MCF 10A (cell line): ENCODE measurements at regions of chr17 and their contacts with region 1.

Region 1: DNA sequence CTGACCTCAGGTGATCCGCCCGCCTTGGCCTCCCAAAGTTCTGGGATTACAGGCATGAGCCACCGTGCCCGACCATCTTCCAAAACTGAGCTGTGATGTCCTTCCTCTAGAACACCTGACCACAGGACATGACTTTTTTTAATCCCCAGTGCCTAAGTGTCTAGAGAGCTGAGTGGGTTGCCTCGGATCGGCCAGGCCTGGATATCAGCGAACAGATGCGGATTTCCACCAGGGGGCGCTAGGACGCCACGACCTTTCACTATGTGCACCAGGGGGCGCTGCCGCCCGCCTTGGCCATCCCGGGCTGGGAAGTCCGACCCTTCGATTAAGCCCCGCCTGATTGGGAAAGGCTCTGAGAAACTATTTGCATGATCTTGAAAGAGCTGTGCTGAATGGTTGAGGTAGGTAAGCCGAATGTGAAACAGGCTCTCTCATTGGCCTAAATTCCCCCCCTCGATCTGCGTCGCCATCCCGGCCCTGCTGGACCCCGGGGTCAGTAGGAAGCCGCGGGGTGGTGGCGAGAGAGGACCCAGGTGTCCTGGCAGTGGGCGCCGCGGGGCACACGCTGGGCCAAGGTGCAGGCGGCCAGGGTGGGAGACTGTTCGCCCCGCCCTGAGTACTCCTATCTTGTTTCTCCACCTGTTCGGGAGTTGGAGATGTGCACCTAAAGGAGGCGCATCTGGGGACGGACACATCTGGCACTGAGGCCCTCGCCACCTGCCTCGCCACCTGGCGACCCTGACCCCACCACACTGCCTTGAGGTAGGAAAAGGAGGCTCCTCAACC is at the start of gene ACBD4:
- DNase-seq: peak; percentile 98
- H3K4me3 Mint-ChIP-seq: peak within 1 kb of the TSS; percentile 79
- H3K27ac Mint-ChIP-seq: peak within 1 kb of the TSS; percentile 63
- H3K4me1 Mint-ChIP-seq: peaks cover 17% of the 10 kb centered on the region
- H3K27me3 Mint-ChIP-seq: no peaks in the 10 kb centered on the region
- CTCF ChIP-seq: peak; percentile 100
- total RNA-seq, gene ACBD4: 7.2 and 7.8 TPM in 2 replicates

Region 2: GRCh38 chr17:44775136-44775837 is 360.1 kb before region 1 on chr17:
- CTCF ChIA-PET with region 1: interaction called, 3 read pairs
- POLR2A ChIA-PET with region 1: no interaction called
- intact Hi-C with region 1: loop called (anchors 1 kb)
- DNase-seq: peak; percentile 99
- H3K4me3 Mint-ChIP-seq: peak overlapping the region; percentile 84
- H3K27ac Mint-ChIP-seq: no peak overlapping the region
- H3K4me1 Mint-ChIP-seq: peaks cover 11% of the 10 kb centered on the region
- H3K27me3 Mint-ChIP-seq: peaks cover 13% of the 10 kb centered on the region
- CTCF ChIP-seq: no peak

Region 3: GRCh38 chr17:44919885-44920564 is 215.4 kb before region 1 on chr17:
- CTCF ChIA-PET with region 1: interaction called, 8 read pairs
- POLR2A ChIA-PET with region 1: no interaction called
- intact Hi-C with region 1: loop called (anchors 5 kb)
- DNase-seq: peak; percentile 85
- H3K4me3 Mint-ChIP-seq: no peak overlapping the region
- H3K27ac Mint-ChIP-seq: no peak overlapping the region
- H3K4me1 Mint-ChIP-seq: peaks cover 19% of the 10 kb centered on the region
- H3K27me3 Mint-ChIP-seq: no peaks in the 10 kb centered on the region
- CTCF ChIP-seq: peak; percentile 81

Region 4: GRCh38 chr17:45108595-45109521 is 26.5 kb before region 1 on chr17:
- CTCF ChIA-PET with region 1: interaction called, 16 read pairs
- POLR2A ChIA-PET with region 1: interaction called, 3 read pairs
- intact Hi-C with region 1: loop called (anchors 2 kb)
- DNase-seq: peak; percentile 29
- H3K4me3 Mint-ChIP-seq: no peak overlapping the region
- H3K27ac Mint-ChIP-seq: peak overlapping the region; percentile 77
- H3K4me1 Mint-ChIP-seq: no peaks in the 10 kb centered on the region
- H3K27me3 Mint-ChIP-seq: no peaks in the 10 kb centered on the region
- CTCF ChIP-seq: no peak

Region 5: DNA sequence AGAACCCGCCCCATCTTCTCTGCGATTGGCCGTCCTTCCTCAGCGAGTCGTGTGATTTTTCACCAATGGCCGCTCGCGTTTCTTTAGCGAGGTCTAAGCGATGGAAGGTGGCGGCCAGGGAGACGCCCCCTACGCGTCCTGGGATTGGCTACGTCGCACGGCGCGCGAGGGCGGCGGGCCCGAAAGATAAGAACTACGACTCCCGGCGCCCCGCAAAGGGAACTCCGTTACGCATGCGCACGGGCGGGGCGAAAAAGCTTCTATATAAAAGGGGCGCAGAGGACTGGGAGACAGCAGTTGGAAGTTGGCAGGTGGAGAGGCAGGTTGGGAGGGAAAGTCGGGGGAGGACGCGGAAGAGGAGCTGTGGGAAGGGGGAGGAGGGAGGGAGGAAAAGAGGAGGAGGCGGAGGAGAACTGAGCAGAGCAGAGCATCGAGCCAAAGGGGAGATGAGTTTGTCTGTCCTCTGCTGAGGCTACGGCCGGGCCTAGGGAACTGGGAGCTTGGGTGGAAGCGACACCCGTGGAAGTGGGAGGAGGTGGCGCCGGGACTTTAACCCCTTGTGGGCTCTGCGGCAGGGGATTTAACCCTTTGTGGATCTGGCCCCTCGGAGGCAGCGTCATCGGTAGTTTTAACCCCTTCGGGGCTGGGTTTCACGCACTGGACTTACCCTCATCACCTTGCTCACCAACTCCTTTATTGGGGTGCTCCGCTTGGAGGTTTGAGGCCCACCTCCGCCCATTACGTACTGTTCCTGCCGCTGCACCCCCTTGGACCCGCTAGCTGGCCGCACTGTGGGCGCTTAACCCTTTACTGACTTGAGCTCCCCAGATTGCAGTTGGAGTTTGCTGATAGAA is 13.0 kb after region 1 on chr17 and contains the start of gene HEXIM1:
- CTCF ChIA-PET with region 1: interaction called, 88 read pairs
- POLR2A ChIA-PET with region 1: interaction called, 115 read pairs
- intact Hi-C with region 1: loop called (anchors 1 kb)
- DNase-seq: peak; percentile 99
- H3K4me3 Mint-ChIP-seq: peak within 1 kb of the TSS; percentile 97
- H3K27ac Mint-ChIP-seq: peak within 1 kb of the TSS; percentile 100
- H3K4me1 Mint-ChIP-seq: peaks cover 23% of the 10 kb centered on the region
- H3K27me3 Mint-ChIP-seq: no peaks in the 10 kb centered on the region
- CTCF ChIP-seq: no peak
- total RNA-seq, gene HEXIM1: 22.5 and 26.7 TPM in 2 replicates

Region 6: GRCh38 chr17:45197555-45198334 is 62.4 kb after region 1 on chr17:
- CTCF ChIA-PET with region 1: interaction called, 77 read pairs
- POLR2A ChIA-PET with region 1: interaction called, 35 read pairs
- intact Hi-C with region 1: loop called (anchors 1 kb)
- DNase-seq: peak; percentile 91
- H3K4me3 Mint-ChIP-seq: no peak overlapping the region
- H3K27ac Mint-ChIP-seq: peak overlapping the region; percentile 19
- H3K4me1 Mint-ChIP-seq: peaks cover 10% of the 10 kb centered on the region
- H3K27me3 Mint-ChIP-seq: no peaks in the 10 kb centered on the region
- CTCF ChIP-seq: peak; percentile 99

Region 7: DNA sequence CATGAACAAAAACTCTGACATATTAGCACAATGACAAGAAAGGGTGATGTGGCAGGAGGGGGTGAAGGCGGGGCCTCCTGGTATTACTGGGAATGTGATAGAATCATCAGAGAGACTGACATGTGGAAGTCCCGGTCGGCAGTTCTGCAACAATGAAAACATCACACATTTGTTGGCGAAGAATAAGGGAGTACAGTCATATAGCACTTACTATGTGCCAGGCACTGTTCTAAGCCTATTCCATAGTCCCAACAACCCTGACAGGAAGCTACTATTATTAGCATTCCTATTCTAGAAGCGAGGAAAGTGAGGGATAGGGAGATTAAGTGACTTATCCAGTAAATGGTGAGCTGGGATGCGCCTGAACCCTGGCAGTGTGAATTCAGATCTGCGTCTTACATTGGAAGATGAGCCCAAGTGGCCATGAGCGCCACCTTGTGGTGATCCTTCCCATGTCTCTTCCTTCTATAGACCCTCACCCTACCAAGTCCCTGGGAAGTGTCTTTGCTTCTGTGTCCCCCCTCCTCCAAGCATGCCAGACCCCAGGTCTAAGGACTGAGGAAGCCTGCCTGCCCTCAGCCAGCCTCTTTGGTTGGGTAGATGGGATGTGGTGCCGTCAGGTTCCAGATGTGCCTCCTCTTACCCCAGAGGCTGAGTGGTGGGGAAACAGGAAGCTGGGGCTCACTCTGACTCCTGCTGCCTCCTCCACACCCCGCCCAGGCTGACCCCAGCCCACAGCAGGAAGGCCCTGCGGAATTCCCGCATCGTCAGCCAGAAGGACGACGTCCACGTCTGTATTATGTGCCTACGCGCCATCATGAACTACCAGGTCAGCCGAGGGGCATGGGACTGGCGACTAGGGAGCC is 100.3 kb after region 1 on chr17:
- CTCF ChIA-PET with region 1: interaction called, 14 read pairs
- POLR2A ChIA-PET with region 1: no interaction called
- intact Hi-C with region 1: loop called (anchors 1 kb)
- DNase-seq: peak; percentile 82
- H3K4me3 Mint-ChIP-seq: no peak overlapping the region
- H3K27ac Mint-ChIP-seq: no peak overlapping the region
- H3K4me1 Mint-ChIP-seq: peaks cover under 1% of the 10 kb centered on the region
- H3K27me3 Mint-ChIP-seq: no peaks in the 10 kb centered on the region
- CTCF ChIP-seq: peak; percentile 78